Vagina (tissue), 2 donors: ENCODE measurements at regions of chr1 and their contacts with region 1.

Region 1: GRCh38 chr1:70979881-70980280 is 67.7 kb downstream of the PTGER3 start:
- DNase-seq: no peak
- H3K4me3 ChIP-seq: no peak overlapping the region
- H3K27ac ChIP-seq: no peak overlapping the region
- H3K4me1 ChIP-seq: no peaks in the 10 kb centered on the region
- H3K27me3 ChIP-seq: no peaks in the 10 kb centered on the region
- CTCF ChIP-seq: no peak
- POLR2A ChIP-seq: no peak

Region 2: GRCh38 chr1:71014178-71014579 is 34.3 kb after region 1 on chr1:
- intact Hi-C with region 1: no loop called
- DNase-seq: no peak
- H3K4me3 ChIP-seq: no peak overlapping the region
- H3K27ac ChIP-seq: no peak overlapping the region
- H3K4me1 ChIP-seq: no peaks in the 10 kb centered on the region
- H3K27me3 ChIP-seq: no peaks in the 10 kb centered on the region
- CTCF ChIP-seq: no peak
- POLR2A ChIP-seq: no peak

Region 3: GRCh38 chr1:71026093-71026492 is 46.2 kb after region 1 on chr1:
- intact Hi-C with region 1: no loop called
- DNase-seq: no peak
- H3K4me3 ChIP-seq: no peak overlapping the region
- H3K27ac ChIP-seq: no peak overlapping the region
- H3K4me1 ChIP-seq: no peaks in the 10 kb centered on the region
- H3K27me3 ChIP-seq: no peaks in the 10 kb centered on the region
- CTCF ChIP-seq: no peak
- POLR2A ChIP-seq: no peak

Region 4: GRCh38 chr1:71193153-71193552 is 213.3 kb after region 1 on chr1:
- intact Hi-C with region 1: no loop called
- DNase-seq: no peak
- H3K4me3 ChIP-seq: no peak overlapping the region
- H3K27ac ChIP-seq: no peak overlapping the region
- H3K4me1 ChIP-seq: no peaks in the 10 kb centered on the region
- H3K27me3 ChIP-seq: no peaks in the 10 kb centered on the region
- CTCF ChIP-seq: no peak
- POLR2A ChIP-seq: no peak

Region 5: GRCh38 chr1:72745413-72745812 is 1765.5 kb after region 1 on chr1:
- intact Hi-C with region 1: no loop called
- DNase-seq: no peak
- H3K4me3 ChIP-seq: no peak overlapping the region
- H3K27ac ChIP-seq: no peak overlapping the region
- H3K4me1 ChIP-seq: no peaks in the 10 kb centered on the region
- H3K27me3 ChIP-seq: no peaks in the 10 kb centered on the region
- CTCF ChIP-seq: no peak
- POLR2A ChIP-seq: no peak

Region 6: DNA sequence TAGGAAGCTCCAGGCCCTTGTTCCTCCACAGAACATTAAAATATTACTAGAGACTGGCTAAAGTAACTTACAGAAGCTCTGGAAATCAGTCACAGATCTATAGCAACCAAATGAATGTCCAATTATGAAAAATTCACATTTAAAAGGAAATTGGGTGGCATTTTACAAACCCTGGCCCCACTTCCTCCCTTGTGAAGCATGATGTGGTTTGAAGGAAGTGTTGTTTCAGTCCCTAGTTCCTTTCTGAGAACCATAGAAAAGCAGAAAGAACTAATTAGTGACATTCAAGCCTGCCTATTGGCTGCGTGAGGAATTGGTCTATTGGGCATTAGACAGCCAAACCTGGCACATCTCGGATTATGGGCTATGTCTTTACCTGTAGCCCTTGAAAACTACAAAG is 1952.1 kb after region 1 on chr1:
- intact Hi-C with region 1: loop called (anchors 5 kb)
- DNase-seq: no peak
- H3K4me3 ChIP-seq: no peak overlapping the region
- H3K27ac ChIP-seq: no peak overlapping the region
- H3K4me1 ChIP-seq: no peaks in the 10 kb centered on the region
- H3K27me3 ChIP-seq: no peaks in the 10 kb centered on the region
- CTCF ChIP-seq: no peak
- POLR2A ChIP-seq: no peak